GM10248 (cell line): ENCODE measurements at regions of chr11 and their contacts with region 1.

Region 1: GRCh38 chr11:77672264-77672663 is 34.7 kb upstream of the CLNS1A start:
- DNase-seq: no peak
- CTCF ChIP-seq: no peak

Region 2: DNA sequence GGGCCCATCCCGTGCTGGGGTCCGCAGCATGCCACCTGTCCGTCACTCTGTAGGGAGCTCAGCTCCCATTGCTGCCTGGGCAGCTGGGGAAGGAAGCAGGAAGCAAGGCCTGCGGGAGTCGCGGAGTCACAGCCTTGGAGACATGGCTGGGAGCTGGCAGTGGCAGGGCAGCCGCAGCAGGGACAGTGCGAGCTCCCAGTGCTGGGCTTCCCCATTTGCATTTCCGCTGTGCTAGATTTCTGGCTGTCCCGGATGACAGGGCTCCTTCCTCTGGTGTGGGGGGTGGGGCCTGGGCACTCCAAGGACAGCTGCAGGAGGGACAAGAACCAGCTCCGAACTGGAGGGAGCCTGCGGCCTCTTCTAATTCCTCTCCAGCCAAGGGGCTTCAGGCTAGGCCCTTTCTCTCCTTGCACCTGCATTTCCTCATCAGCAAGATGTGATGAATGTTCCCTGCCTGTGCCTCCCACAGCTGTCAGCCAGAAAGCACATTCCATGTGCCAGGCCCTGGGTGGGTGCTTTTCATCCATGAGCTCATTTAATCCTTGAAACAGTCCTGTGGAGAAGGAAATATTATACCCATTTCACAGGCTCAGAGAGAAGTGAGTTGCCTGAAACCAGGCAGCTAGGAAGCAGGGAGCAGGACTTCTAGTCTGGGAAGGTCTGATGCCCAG is 496.3 kb before region 1 on chr11:
- CTCF ChIA-PET with region 1: no interaction called
- POLR2A ChIA-PET with region 1: no interaction called
- DNase-seq: no peak
- CTCF ChIP-seq: no peak

Region 3: GRCh38 chr11:77658213-77659013 is 13.9 kb before region 1 on chr11:
- CTCF ChIA-PET with region 1: interaction called, 16 read pairs
- POLR2A ChIA-PET with region 1: no interaction called
- DNase-seq: no peak
- CTCF ChIP-seq: no peak

Region 4: DNA sequence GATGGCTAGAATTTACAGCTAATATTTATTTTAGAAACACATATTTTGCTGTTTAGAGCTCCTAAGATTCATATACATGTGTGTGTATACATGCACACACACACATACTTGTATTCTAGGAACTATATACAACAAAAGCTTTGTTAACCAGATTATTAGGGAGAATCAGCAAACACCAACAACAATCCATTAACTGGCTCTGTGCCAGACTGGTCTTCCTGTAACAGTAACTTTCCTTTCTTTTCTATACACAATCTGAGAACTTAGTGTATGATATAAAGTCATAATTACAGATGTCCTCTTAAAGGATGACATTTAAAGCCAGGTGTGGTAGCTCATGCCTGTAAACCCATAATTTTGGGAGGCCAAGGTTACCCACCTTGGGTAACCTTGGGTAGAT is 14.8 kb after region 1 on chr11:
- CTCF ChIA-PET with region 1: interaction called, 10 read pairs
- POLR2A ChIA-PET with region 1: no interaction called
- DNase-seq: no peak
- CTCF ChIP-seq: no peak